A549 (cell line): ENCODE measurements at regions of chr11 and their contacts with region 1.

Region 1: DNA sequence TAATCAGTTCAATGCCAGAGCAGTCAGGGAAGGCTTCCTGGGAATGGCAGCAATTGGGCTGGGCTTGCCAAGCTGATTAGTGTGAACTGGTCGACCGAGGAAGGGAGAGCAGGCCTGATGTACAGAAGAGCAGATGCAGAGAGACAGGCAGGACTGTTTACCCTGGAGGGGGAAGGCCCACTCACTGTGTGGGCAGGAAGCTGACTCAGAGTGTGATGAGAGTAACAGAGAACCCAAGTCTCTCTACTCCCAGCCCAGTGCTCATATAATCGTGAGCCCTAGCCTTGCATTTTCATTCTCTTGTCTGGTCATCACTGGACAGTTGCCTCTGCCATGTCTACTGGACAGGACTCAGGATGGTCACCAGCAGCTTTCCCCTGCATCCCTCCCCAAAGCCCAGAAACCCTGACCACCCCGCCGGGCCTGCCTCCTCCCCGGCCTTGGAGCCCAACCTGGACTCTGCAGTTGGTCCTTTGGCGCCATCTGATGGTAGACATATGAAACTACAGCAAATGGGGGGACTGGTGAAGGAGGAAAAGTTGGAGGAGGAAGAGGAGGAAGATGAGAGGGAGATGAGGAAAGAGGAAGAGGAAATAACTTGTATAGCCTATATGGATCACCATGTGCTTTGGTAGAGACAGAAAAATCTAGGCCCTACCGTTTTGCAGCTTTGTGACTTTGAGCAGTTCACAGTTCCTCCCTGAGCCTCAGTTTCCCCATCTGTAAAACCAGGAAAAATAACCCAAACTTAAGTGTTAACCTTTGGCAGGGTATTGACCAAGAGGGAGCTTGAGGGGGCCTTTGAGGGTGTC is 43.4 kb upstream of the PRDM11 start:
- DNase-seq: peak; percentile 66 to 74
- ATAC-seq: peak; percentile 49 to 73; a peak in 5 of 6 replicates
- H3K4me3 ChIP-seq: no peak overlapping the region
- H3K27ac ChIP-seq: peak overlapping the region; percentile 35 to 68; a peak in 4 of 6 replicates
- H3K4me1 ChIP-seq: peaks cover 8% of the 10 kb centered on the region; the same call in 2 of the 3 replicates
- CTCF ChIP-seq: peak; percentile 95
- EP300 ChIP-seq: no peak
- POLR2A ChIP-seq: no peak
- RAD21 ChIP-seq: peak; percentile 97 to 99

Region 2: DNA sequence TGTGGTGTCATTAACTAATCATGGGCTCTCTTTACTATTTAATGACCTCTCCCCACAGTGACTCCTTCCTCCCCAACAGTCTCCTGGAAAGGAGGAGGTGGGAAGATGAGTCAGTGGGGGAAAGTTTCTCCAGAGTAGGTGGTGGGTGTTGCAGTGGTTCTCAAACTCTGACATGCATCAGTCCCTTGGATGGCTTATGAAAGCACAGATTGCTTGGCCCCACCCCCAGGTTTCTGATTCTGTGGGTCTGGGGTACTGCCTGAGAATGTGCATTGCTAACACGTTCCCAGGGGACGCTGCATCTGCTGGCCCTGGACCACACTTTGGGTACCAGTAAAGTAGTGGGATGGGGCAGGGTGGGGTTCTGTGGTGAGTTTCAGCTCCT is 527.7 kb before region 1 on chr11:
- CTCF ChIA-PET with region 1: no interaction called
- POLR2A ChIA-PET with region 1: no interaction called
- DNase-seq: no peak
- ATAC-seq: no peak
- H3K4me3 ChIP-seq: no peak overlapping the region
- H3K27ac ChIP-seq: no peak overlapping the region
- H3K4me1 ChIP-seq: no peaks in the 10 kb centered on the region
- CTCF ChIP-seq: no peak
- EP300 ChIP-seq: no peak
- POLR2A ChIP-seq: no peak
- RAD21 ChIP-seq: no peak

Region 3: GRCh38 chr11:44814881-44815592 is 288.0 kb before region 1 on chr11:
- CTCF ChIA-PET with region 1: no interaction called
- POLR2A ChIA-PET with region 1: no interaction called
- DNase-seq: no peak
- ATAC-seq: peak; percentile 60 to 63; a peak in 4 of 6 replicates
- H3K4me3 ChIP-seq: no peak overlapping the region
- H3K27ac ChIP-seq: peak overlapping the region in 1 of 2 experiments; percentile 12; a peak in 1 of 6 replicates
- H3K4me1 ChIP-seq: no peaks in the 10 kb centered on the region
- CTCF ChIP-seq: no peak
- EP300 ChIP-seq: no peak
- POLR2A ChIP-seq: no peak
- RAD21 ChIP-seq: no peak

Region 4: DNA sequence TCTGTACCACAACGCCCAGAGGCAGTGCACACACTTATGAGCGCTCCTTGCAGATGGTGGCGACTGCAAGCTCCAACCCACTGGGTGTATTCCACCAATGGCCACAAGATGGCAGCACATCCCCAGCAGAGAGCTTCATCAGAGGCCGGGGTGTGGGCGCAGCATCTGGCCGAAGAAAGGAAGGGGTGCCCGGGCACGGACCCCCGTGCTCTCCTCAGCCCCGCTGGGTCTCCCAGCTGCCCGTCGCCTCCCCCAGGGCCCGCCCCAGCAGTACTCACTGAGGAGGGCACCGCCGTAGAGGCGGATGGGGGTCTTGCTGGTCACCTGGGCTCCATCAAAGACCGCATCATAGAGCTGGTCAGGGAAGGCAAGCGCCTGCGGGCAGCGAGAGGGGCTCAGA is 166.5 kb before region 1 on chr11:
- CTCF ChIA-PET with region 1: interaction called, 1,740 read pairs
- POLR2A ChIA-PET with region 1: interaction called, 3 read pairs
- DNase-seq: peak; percentile 68 to 80
- ATAC-seq: peak; percentile 88 to 93
- H3K4me3 ChIP-seq: no peak overlapping the region
- H3K27ac ChIP-seq: no peak overlapping the region
- H3K4me1 ChIP-seq: 0 out of 3 replicates have a peak, but pooled peaks cover 3% of the 10 kb centered on the region
- CTCF ChIP-seq: peak; percentile 88
- EP300 ChIP-seq: no peak
- POLR2A ChIP-seq: no peak
- RAD21 ChIP-seq: peak; percentile 97

Region 5: DNA sequence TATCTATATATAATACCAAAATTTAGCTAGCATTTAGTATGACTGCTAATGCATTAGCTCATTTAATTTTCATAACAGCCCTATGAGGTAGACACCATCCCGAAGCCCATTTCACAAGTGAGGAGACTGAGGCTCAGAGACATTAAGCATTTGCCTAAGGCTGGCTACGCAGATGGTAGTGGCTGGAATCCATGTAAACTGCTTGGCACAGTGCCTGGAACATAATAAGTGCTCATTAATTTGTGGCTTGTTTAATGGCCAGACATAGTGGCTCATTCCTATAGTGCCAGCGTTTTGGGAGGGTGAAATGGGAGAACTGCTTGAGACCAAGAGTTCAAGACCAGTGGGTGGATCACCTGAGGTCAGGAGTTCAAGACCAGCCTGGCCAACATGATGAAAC is 134.5 kb before region 1 on chr11:
- CTCF ChIA-PET with region 1: interaction called, 64 read pairs
- POLR2A ChIA-PET with region 1: no interaction called
- DNase-seq: no peak
- ATAC-seq: no peak
- H3K4me3 ChIP-seq: no peak overlapping the region
- H3K27ac ChIP-seq: no peak overlapping the region
- H3K4me1 ChIP-seq: no peaks in the 10 kb centered on the region
- CTCF ChIP-seq: no peak
- EP300 ChIP-seq: no peak
- POLR2A ChIP-seq: no peak
- RAD21 ChIP-seq: no peak

Region 6: DNA sequence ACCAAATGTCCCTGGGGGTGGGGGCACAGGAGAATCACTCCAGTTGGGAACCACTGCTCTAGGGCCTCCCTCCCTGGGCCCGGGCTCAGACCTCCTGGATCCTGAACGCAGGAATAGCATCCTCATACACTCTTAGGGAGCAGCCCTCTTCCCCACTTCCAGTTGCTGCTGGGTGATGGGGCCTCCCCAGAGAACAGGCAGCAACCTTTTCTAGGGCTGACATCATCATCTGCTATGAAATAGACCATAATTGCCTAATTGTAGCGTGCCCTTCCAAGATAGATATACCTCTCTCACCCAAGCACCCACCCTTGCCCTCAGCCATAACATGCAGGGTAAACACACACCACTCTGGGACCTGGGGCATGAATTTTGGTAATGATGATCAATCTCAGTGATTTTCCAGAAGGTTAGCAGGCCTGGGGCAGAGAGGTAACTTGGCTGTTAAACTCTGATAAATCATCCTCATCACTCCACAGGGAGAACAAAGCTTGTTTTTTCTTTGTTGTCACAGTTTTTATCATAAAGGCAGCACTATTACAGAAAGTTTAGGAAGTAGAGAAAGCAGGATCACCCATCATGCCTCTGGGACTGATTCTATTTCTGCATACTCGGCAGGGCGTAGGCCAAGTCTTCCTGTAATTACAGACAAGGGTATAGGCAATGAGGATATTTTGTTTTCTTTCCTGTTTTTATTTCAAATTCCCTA is 44.9 kb before region 1 on chr11:
- CTCF ChIA-PET with region 1: interaction called, 11 read pairs
- POLR2A ChIA-PET with region 1: no interaction called
- DNase-seq: no peak
- ATAC-seq: no peak
- H3K4me3 ChIP-seq: no peak overlapping the region
- H3K27ac ChIP-seq: no peak overlapping the region
- H3K4me1 ChIP-seq: 0 out of 3 replicates have a peak, but pooled peaks cover 4% of the 10 kb centered on the region
- CTCF ChIP-seq: no peak
- EP300 ChIP-seq: no peak
- POLR2A ChIP-seq: no peak
- RAD21 ChIP-seq: no peak

Region 7: DNA sequence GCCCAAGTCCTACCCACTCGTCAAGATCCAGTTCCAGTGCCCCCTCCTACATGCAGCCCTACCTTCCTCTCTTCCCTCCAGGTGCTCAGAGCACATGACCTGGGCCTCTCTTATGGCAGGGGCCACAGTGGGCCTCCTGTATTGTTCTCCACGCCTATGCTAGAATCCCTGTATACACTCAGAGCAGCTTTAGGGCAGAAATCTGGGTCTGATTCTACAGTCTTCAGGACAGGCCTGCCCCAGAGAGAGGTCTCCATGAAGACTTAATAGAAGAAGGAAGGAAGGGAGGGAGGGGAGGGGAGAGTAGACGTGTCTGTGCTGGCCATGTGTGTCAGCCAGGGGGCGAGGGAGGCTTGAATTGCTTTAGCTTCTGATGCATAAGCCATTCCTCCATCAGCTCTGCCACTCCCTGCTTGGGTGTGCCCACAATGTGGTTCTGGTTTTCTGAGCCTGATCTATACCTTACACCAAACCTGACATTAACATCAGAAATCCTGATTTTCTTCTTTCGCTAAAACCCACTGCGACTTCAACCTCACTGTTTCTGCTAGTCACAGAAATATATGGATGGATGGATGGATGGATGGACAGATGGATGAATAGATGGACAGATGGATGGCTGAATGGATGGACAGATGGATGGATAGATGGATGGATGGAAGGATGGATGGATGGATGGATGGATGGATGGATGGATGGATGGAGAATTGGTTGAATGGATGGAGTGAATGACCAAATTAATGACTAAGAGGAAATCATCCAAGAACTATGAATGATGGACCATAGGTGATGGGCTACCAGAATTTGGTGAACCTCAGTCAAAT is 13.1 kb before region 1 on chr11:
- CTCF ChIA-PET with region 1: interaction called, 106 read pairs
- POLR2A ChIA-PET with region 1: no interaction called
- DNase-seq: peak in 1 of 2 experiments; percentile 60
- ATAC-seq: peak; percentile 70 to 76
- H3K4me3 ChIP-seq: no peak overlapping the region
- H3K27ac ChIP-seq: peak overlapping the region; percentile 46 to 73; a peak in 4 of 6 replicates
- H3K4me1 ChIP-seq: peaks cover 39% of the 10 kb centered on the region
- CTCF ChIP-seq: no peak
- EP300 ChIP-seq: no peak
- POLR2A ChIP-seq: no peak
- RAD21 ChIP-seq: no peak

Region 8: GRCh38 chr11:45304111-45304991 is 201.3 kb after region 1 on chr11:
- CTCF ChIA-PET with region 1: interaction called, 14 read pairs
- POLR2A ChIA-PET with region 1: no interaction called
- DNase-seq: no peak
- ATAC-seq: no peak
- H3K4me3 ChIP-seq: no peak overlapping the region
- H3K27ac ChIP-seq: no peak overlapping the region
- H3K4me1 ChIP-seq: peaks cover 4% of the 10 kb centered on the region; the same call in 1 of the 3 replicates
- CTCF ChIP-seq: no peak
- EP300 ChIP-seq: no peak
- POLR2A ChIP-seq: no peak
- RAD21 ChIP-seq: no peak